Left cardiac atrium (tissue), 4 donors: ENCODE measurements at regions of chr6 and their contacts with region 1.

Region 1: DNA sequence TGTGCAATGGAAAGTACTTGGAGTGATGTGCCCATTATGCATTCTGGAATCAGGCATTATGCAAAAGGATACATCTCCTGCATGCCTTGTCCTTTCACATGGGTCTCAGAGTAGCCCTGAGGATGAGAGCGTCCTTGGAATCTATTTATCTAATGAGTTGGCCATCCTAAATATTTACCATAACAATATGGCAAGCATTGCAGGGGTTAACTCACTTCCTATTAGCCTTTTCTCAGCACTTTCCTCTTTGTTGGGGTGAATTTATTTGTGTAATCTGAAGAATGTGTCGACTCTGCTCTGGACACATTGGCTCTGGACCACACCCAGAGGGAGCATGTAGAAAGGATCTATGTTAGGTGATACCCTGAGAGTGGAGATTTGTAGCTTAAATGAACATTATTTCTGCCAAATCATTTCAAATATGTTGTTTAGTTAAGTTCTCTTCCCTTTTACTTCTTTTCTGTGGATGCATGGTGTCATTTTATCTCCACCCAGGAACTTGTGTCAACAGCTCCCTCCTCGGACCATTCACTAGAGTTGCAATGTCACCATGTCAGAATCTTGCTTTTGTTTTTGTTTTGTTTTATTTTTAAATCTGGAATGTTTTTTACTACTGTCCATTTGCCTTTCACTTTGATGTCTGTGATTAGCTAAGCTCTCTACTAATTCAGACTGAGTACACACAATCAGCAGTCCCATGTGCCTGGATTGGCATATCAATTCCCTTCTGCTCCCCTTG is 757.0 kb upstream of the MMS22L start:
- DNase-seq: no peak
- ATAC-seq: no peak

Region 2: DNA sequence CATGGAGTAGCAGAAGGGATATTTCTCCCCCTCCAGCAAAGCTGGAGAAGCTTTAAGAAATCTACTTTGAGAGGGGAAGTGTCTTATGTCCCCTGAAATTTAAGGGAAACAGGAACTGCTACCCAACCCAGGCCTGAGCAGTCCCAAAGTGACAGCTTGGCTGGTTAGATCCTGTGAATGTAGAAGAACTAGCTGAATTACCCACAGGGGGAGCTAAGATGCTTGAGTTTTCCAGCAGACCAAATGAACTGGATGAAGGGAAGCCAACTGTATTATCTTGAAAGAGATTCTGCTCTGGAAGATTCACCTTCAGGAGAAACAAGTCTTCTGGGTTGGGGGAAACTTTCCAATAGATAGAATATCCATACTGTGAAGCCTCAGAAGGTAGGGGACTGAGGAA is 453.7 kb before region 1 on chr6:
- intact Hi-C with region 1: loop called in 1 of 2 experiments (anchors 10 kb)
- DNase-seq: no peak
- ATAC-seq: peak; percentile 49 to 57